WTC11 (cell line): ENCODE measurements at regions of chr6 and their contacts with region 1.

Region 1: GRCh38 chr6:26122793-26123674 is 35.8 kb downstream of the HFE start:
- DNase-seq: peak; percentile 89
- ATAC-seq: peak; percentile 51
- H3K4me3 Mint-ChIP-seq: peak overlapping the region; percentile 95
- H3K27ac Mint-ChIP-seq: peak overlapping the region; percentile 99
- H3K4me1 Mint-ChIP-seq: peaks cover 40% of the 10 kb centered on the region
- H3K27me3 Mint-ChIP-seq: no peaks in the 10 kb centered on the region
- CTCF ChIP-seq: no peak

Region 2: GRCh38 chr6:25944688-25945574 is 178.1 kb before region 1 on chr6:
- CTCF ChIA-PET with region 1: no interaction called
- POLR2A ChIA-PET with region 1: no interaction called
- DNase-seq: no peak
- ATAC-seq: no peak
- H3K4me3 Mint-ChIP-seq: no peak overlapping the region
- H3K27ac Mint-ChIP-seq: no peak overlapping the region
- H3K4me1 Mint-ChIP-seq: no peaks in the 10 kb centered on the region
- H3K27me3 Mint-ChIP-seq: no peaks in the 10 kb centered on the region
- CTCF ChIP-seq: no peak

Region 3: DNA sequence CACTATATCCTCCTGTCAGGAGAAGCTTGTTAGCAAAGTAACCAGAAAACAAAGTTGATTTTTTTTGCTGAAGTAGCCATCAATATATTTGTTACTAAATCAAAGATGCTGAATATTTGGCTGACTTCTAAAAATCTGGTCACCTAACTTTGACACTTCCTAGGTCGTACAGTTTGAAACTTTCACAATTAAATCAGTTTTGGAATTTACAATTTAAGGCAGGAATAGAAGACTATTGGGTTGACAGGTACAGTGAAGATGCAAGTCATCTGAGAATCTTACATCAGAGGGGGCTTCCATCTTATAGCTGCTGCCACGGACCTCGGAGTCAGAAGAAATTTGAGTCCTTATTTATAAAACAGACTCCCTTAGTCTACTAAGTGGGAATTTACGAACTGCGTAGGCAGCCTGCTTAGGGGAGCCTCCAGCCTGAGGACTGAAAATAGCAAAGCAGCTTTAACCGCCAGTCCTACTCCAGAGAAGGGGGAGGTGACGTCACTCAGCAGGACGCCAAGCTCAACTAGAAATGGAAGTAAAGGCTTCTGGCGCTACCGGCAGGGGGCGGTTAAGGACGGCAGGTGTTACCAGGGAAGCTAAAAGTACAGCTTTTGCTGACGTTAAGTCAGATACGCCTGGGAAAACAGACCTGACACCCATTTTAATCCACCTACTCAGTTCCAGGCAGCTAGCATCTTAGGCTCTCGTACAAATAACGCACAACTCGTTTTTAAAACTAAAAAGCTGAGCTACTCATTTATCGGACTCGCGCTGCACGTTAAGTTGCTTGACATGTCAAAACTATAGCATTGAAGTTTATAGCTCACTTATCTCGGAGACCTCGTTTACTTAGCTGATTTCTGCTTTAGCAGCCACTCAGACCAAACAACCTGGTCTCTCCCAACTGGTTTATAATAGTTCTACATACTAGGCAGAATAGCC is 96.9 kb before region 1 on chr6:
- CTCF ChIA-PET with region 1: interaction called, 4 read pairs
- POLR2A ChIA-PET with region 1: interaction called, 260 read pairs
- DNase-seq: peak; percentile 95
- ATAC-seq: peak; percentile 12
- H3K4me3 Mint-ChIP-seq: peak overlapping the region; percentile 92
- H3K27ac Mint-ChIP-seq: peak overlapping the region; percentile 98
- H3K4me1 Mint-ChIP-seq: peaks cover 73% of the 10 kb centered on the region
- H3K27me3 Mint-ChIP-seq: no peaks in the 10 kb centered on the region
- CTCF ChIP-seq: peak; percentile 60

Region 4: DNA sequence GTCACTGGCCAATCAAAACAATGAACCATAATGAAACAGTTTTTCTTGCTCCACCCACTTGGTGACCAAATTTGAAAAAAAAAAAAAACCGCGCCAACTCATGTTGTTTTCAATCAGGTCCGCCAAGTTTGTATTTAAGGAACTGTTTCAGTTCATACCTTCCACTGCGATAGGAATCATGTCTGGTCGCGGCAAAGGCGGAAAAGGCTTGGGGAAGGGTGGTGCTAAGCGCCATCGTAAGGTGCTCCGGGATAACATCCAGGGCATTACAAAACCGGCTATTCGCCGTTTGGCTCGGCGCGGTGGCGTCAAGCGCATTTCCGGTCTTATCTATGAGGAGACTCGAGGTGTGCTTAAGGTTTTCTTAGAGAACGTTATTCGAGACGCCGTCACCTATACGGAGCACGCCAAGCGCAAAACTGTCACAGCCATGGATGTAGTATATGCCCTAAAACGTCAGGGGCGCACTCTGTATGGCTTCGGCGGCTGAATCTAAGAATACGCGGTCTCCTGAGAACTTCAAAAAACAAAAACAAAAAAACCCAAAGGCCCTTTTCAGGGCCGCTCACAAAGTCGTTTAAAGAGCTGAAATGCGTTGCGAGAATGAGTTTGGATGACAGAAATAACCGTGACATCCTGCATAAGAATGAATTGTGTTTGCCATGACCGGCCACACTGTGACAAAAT is 19.1 kb before region 1 on chr6:
- CTCF ChIA-PET with region 1: interaction called, 7 read pairs
- POLR2A ChIA-PET with region 1: interaction called, 225 read pairs
- DNase-seq: peak; percentile 73
- ATAC-seq: peak; percentile 79
- H3K4me3 Mint-ChIP-seq: peak overlapping the region; percentile 84
- H3K27ac Mint-ChIP-seq: peak overlapping the region; percentile 98
- H3K4me1 Mint-ChIP-seq: peaks cover 23% of the 10 kb centered on the region
- H3K27me3 Mint-ChIP-seq: no peaks in the 10 kb centered on the region
- CTCF ChIP-seq: no peak

Region 5: DNA sequence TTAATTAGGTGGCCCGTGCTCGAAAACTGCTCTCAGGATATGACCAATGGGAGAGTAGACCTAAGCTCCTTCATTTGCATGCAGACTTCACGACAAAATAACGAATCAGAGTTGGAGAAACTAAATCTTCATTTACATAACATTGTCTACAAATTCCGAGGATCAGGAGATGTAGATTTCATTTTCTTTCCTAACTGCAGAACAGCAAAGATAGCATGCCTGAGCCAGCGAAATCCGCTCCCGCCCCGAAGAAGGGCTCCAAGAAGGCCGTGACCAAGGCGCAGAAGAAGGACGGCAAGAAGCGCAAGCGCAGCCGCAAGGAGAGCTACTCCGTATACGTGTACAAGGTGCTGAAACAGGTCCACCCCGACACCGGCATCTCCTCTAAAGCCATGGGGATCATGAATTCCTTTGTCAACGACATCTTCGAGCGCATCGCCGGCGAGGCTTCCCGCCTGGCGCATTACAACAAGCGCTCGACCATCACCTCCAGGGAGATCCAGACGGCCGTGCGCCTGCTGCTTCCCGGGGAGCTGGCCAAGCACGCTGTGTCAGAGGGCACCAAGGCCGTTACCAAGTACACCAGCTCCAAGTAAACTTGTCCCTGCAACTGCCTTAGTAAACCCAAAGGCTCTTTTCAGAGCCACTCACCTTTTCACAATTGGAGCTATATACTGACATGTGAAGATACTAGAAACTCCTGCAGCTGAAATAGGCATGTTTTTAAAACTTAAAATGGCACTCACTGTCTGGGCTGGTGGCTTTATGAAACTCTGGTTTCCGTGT is 60.7 kb after region 1 on chr6:
- CTCF ChIA-PET with region 1: no interaction called
- POLR2A ChIA-PET with region 1: interaction called, 140 read pairs
- DNase-seq: peak; percentile 74
- ATAC-seq: peak; percentile 78
- H3K4me3 Mint-ChIP-seq: peak overlapping the region; percentile 90
- H3K27ac Mint-ChIP-seq: peak overlapping the region; percentile 99
- H3K4me1 Mint-ChIP-seq: peaks cover 45% of the 10 kb centered on the region
- H3K27me3 Mint-ChIP-seq: no peaks in the 10 kb centered on the region
- CTCF ChIP-seq: no peak

Region 6: DNA sequence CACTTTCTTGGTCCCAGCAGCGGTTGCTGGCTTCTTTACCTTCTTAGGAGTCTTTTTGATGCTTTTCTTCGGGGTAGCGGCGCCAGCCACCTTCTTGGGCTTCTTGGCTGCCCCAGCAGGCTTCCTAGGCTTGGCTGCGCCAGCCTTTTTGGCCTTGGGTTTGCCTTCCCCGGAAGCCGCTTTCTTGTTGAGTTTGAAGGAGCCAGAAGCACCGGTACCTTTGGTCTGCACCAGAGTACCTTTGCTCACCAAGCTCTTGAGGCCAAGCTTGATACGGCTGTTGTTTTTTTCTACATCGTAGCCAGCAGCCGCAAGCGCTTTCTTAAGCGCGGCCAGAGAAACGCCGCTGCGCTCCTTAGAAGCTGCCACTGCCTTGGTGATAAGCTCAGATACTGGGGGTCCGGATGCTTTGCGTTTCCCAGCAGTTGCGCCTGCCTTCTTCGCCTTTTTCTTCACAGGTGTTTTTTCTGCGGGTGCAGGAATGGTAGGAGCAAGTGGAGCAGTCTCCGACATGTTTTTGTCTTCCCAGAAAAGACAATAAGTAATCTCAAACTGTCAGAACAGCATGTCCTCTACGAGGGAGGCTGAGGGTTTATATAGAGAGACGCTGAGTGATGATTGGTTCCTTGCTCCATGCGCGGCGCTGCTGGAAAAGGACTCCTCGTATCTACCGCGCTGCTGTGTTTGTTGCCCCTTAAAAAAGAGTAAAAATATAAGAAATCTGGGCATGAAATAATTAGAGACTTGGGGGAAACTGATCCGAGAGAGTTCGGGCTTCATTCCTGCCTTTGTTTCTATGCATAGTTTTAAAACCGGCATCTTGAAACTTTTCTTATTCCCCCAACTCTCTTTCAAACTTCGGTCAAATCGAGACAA is 111.6 kb after region 1 on chr6:
- CTCF ChIA-PET with region 1: no interaction called
- POLR2A ChIA-PET with region 1: interaction called, 49 read pairs
- DNase-seq: no peak
- ATAC-seq: peak; percentile 70
- H3K4me3 Mint-ChIP-seq: peak overlapping the region; percentile 94
- H3K27ac Mint-ChIP-seq: peak overlapping the region; percentile 99
- H3K4me1 Mint-ChIP-seq: peaks cover 33% of the 10 kb centered on the region
- H3K27me3 Mint-ChIP-seq: no peaks in the 10 kb centered on the region
- CTCF ChIP-seq: no peak

Region 7: DNA sequence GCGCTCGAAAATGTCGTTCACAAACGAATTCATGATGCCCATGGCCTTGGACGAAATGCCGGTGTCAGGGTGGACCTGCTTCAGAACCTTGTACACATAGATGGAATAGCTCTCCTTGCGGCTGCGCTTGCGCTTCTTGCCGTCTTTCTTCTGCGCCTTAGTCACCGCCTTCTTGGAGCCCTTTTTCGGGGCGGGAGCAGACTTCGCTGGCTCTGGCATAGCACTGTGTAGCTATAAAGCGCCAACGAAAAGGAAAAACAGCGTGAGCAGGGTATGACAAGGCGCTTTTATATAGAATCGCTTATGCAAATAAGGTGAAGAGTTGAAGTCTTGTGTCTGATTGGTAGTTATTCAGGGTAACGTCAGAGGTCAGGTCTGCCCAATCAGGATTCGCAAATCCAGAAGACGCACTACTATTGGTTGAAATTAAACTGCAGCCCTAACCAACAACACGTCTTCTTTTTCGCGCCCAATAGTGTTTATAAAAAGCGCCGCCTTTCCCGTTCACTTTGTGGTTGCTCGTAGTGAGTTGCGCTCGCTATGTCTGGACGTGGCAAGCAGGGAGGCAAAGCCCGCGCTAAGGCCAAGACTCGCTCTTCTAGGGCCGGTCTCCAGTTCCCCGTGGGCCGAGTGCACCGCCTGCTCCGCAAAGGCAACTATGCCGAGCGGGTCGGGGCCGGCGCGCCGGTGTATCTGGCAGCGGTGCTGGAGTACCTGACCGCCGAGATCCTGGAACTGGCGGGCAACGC is 1009.7 kb after region 1 on chr6:
- CTCF ChIA-PET with region 1: no interaction called
- POLR2A ChIA-PET with region 1: interaction called, 20 read pairs
- DNase-seq: peak; percentile 85
- ATAC-seq: peak; percentile 86
- H3K4me3 Mint-ChIP-seq: no peak overlapping the region
- H3K27ac Mint-ChIP-seq: no peak overlapping the region
- H3K4me1 Mint-ChIP-seq: peaks cover 65% of the 10 kb centered on the region
- H3K27me3 Mint-ChIP-seq: no peaks in the 10 kb centered on the region
- CTCF ChIP-seq: no peak

Region 8: DNA sequence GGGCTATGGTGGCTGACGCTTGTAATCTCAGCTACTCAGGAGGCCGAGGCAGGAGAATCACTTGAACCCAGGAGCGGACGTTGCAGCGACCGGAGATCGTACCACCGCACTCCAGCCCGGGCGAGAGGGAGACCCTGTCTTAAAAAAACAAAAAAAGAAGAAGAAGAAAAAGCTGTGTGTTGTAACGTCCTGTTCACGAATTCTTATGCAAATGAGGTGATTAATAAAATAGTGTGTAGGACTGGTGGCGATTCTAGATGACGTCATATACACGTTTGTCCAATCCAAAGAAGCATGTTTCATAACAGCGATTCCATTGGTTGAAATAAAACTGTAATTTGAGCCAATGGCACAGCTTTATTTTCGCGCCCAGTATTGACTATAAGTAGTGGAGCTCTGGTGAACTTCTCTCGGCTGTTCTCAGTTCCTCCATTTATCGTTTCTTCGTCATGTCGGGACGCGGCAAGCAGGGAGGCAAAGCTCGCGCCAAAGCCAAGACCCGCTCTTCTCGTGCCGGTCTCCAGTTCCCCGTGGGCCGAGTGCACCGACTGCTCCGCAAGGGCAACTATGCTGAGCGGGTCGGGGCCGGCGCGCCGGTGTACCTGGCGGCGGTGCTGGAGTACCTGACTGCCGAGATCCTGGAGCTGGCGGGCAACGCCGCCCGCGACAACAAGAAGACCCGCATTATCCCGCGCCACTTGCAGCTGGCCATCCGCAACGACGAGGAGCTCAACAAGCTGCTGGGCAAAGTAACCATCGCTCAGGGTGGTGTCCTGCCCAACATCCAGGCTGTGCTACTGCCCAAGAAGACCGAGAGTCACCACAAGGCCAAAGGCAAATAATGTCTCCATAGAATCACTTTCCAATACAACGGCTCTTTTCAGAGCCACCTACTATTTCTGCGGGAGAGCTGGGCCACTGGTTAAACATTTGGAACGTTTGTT is 1742.1 kb after region 1 on chr6:
- CTCF ChIA-PET with region 1: no interaction called
- POLR2A ChIA-PET with region 1: interaction called, 36 read pairs
- DNase-seq: peak; percentile 73
- ATAC-seq: peak; percentile 51
- H3K4me3 Mint-ChIP-seq: peak overlapping the region; percentile 97
- H3K27ac Mint-ChIP-seq: peak overlapping the region; percentile 100
- H3K4me1 Mint-ChIP-seq: peaks cover 25% of the 10 kb centered on the region
- H3K27me3 Mint-ChIP-seq: peaks cover 4% of the 10 kb centered on the region; the same call in 1 of the 2 replicates
- CTCF ChIP-seq: no peak